Activated T-helper 1 cell treated with anti-CD3 and anti-CD28 coated beads, Interleukin-12 subunit alpha, Interleukin-12 subunit beta, Interleukin-2, Interleukin-4 antibody, amounts not matched to agents 30 ng/mL and 10 ng/mL and 1 ng/mL, durations not matched to agents 14 hours and 24 hours and 36 hours (primary cell): ENCODE measurements at regions of chr5 and their contacts with region 1.

Region 1: DNA sequence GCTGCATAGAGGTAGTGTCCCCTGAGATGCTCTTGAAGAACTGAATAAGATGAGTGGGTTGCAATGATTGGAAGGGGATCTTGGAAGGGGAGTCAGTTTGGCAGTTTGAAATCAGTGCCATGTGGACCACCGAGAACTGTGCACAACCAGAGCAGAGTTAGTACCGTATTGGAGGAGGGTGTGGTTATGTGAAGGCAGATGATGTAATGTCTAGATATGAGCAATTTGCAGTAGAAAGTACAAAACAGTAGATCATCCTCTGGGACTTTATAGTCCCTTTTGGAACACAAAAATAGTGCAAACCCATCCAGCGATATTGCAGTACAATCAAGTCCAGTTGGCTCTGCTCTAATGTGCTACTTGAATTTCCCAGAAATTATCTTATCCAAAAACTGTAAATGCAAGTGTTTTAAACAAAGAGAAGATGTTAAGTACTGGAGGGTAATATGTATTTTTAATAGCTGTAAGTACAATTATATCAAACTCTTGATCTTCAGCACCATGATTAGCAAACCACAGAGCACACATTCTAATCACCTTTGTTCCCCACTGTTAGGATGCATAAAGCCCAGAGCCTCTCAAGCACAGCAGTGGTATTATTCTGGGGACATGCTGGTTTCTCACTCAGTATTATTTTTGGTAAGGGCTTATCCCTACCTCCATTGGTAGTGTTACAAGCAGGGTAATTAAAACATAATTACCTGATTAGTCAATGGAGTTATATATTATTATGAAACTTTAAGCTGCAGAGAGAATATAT is 41.5 kb downstream of the MEGF10 start:
- DNase-seq: no peak
- H3K4me3 Mint-ChIP-seq: no peak overlapping the region
- H3K27ac Mint-ChIP-seq: no peak overlapping the region
- H3K4me1 Mint-ChIP-seq: no peaks in the 10 kb centered on the region
- H3K27me3 Mint-ChIP-seq: peaks cover 19% of the 10 kb centered on the region

Region 2: DNA sequence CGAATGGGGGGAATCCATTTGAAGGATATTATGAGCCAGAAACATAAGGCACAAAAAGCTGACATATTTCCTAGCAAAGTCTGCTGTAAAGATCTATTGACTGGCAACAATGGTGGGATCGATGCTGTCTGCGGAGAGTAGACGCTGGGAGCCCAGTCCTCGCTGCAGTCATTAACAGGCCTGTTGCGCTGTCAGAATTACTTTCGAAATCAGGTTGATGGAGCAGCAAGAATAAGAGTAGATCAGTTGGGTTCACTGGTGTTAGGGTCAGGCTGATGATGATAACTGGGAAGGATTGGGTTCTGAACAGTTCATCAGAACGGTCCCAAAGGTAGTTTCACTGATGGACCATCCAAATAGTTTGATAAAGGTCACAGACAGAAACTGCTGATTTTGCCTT is 45.6 kb after region 1 on chr5:
- intact Hi-C with region 1: loop called (anchors 1 kb)
- DNase-seq: no peak
- H3K4me3 Mint-ChIP-seq: no peak overlapping the region
- H3K27ac Mint-ChIP-seq: no peak overlapping the region
- H3K4me1 Mint-ChIP-seq: no peaks in the 10 kb centered on the region
- H3K27me3 Mint-ChIP-seq: peaks cover 4% of the 10 kb centered on the region